Activated T-helper 1 cell treated with anti-CD3 and anti-CD28 coated beads, Interleukin-12 subunit alpha, Interleukin-12 subunit beta, Interleukin-2, Interleukin-4 antibody, amounts not matched to agents 30 ng/mL and 10 ng/mL and 1 ng/mL, durations not matched to agents 14 hours and 24 hours and 36 hours (primary cell): ENCODE measurements at regions of chr5 and their contacts with region 1.

Region 1: DNA sequence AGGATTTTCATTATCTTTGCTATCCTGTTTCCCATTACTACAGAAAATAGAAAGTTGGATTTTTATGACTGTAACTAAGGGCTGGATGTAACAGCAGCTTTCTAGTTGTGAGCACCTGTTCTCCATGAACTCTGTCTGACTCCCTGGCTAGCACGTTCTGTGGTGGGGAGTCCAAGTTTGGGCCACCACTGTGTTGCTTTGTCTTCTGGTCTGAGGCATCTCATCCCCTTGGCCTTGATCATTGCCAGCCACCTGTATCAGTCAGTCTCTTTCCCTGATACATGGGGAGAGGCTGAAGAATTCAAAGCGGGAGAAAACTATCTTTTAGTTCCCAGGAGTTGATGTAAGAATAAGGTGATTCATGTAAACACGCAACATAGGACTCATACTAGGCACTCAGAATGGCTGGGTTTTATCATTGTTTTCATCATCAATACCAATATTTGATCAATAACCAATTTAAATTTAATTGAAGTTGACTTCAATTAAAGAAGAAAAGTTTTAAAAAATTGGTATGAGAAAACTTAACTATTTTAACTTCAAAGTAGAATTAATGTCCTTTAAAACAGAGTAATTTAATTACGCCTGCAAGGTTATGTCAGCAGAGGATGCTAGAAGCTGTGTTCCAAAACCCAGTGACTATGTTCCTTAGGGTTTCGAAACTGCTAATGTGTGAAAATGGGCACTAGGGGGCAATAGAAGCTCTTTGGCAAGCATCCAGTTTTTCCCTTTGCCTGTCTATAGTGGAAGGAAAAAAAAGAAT is 33.6 kb downstream of the WDR70 start:
- DNase-seq: peak; percentile 11
- H3K4me3 Mint-ChIP-seq: no peak overlapping the region
- H3K27ac Mint-ChIP-seq: no peak overlapping the region
- H3K4me1 Mint-ChIP-seq: no peaks in the 10 kb centered on the region
- H3K27me3 Mint-ChIP-seq: no peaks in the 10 kb centered on the region

Region 2: GRCh38 chr5:37554938-37555337 is 142.2 kb after region 1 on chr5:
- intact Hi-C with region 1: loop called (anchors 1 kb)
- DNase-seq: no peak
- H3K4me3 Mint-ChIP-seq: no peak overlapping the region
- H3K27ac Mint-ChIP-seq: no peak overlapping the region
- H3K4me1 Mint-ChIP-seq: no peaks in the 10 kb centered on the region
- H3K27me3 Mint-ChIP-seq: no peaks in the 10 kb centered on the region

Region 3: DNA sequence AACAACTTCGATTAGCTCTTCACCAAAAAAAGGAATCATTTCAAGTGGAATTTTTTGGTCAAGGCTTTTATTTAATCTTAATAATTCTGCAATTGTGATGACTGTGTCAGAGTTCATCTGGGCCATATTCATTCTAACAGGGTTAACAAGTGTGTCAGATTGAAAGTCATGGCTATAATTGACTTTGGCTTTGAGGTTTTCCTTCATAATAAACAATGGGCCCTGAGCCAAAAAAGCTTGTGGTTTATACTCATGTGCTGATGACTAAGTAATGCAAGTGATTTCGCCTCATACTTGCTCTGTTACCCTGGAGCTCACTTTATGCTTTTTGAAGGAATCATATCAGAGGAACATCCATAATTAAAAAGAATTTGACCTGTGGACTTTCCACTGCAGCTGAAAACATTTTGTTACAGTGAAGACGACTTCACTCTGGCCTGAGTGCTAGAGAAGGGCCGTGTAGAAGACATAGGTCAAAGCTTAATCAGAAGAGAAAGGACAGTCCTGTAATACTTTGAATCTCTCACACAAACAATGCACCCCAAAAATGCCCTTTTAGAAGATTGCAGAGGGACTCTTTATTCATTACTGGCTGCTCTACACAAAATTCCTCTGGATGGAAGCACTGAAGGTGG is 325.5 kb after region 1 on chr5:
- intact Hi-C with region 1: loop called (anchors 1 kb)
- DNase-seq: peak; percentile 4
- H3K4me3 Mint-ChIP-seq: peak overlapping the region; percentile 51
- H3K27ac Mint-ChIP-seq: peak overlapping the region; percentile 81
- H3K4me1 Mint-ChIP-seq: peaks cover 35% of the 10 kb centered on the region
- H3K27me3 Mint-ChIP-seq: no peaks in the 10 kb centered on the region

Region 4: GRCh38 chr5:37837414-37838032 is 424.8 kb after region 1 on chr5:
- intact Hi-C with region 1: loop called (anchors 2 kb)
- DNase-seq: peak; percentile 49
- H3K4me3 Mint-ChIP-seq: peak overlapping the region; percentile 64
- H3K27ac Mint-ChIP-seq: peak overlapping the region; percentile 83
- H3K4me1 Mint-ChIP-seq: peaks cover 20% of the 10 kb centered on the region
- H3K27me3 Mint-ChIP-seq: peaks cover 81% of the 10 kb centered on the region

Region 5: GRCh38 chr5:38193015-38193581 is 780.4 kb after region 1 on chr5:
- intact Hi-C with region 1: loop called (anchors 1 kb)
- DNase-seq: peak; percentile 31
- H3K4me3 Mint-ChIP-seq: no peak overlapping the region
- H3K27ac Mint-ChIP-seq: no peak overlapping the region
- H3K4me1 Mint-ChIP-seq: no peaks in the 10 kb centered on the region
- H3K27me3 Mint-ChIP-seq: peaks cover 23% of the 10 kb centered on the region